Right ventricle myocardium superior (tissue), 1 donor: ENCODE measurements at regions of chr10 and their contacts with region 1.

Region 1: DNA sequence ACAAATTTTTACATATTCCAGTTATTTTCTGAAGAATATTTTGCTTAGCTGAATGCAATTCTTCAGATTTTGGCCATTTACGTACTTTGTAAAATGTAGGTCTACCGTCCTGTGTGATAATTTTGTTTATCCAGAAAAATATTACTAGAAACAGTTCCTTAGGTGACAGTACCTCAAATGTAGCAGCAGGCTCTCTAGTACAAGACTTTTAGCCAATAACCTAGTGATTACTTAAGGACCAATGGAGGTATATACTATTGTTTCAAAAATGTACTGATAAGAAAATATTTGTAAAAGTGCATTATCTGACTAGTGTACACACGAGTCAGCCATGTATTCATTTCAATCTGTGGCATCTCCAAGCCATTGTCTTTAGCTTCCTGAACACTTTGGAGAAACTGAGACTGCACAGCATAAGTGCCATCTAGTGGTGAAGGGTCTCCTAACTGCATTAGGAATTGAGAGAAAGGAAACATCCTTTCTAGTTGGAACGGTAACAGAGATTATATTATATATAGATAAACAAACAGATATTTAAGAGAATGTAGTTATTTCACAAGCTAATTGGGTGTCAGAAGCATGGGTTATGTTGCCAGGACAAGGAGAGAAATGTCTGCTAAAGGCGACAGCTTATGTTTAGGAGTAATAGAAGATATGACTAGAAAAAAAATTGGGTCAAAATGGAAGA is 23.7 kb downstream of the RTKN2 start:
- DNase-seq: no peak
- ATAC-seq: peak; percentile 90

Region 2: GRCh38 chr10:61750929-61751471 is 493.9 kb before region 1 on chr10:
- intact Hi-C with region 1: loop called (anchors 10 kb)
- DNase-seq: peak; percentile 64
- ATAC-seq: peak; percentile 93

Region 3: DNA sequence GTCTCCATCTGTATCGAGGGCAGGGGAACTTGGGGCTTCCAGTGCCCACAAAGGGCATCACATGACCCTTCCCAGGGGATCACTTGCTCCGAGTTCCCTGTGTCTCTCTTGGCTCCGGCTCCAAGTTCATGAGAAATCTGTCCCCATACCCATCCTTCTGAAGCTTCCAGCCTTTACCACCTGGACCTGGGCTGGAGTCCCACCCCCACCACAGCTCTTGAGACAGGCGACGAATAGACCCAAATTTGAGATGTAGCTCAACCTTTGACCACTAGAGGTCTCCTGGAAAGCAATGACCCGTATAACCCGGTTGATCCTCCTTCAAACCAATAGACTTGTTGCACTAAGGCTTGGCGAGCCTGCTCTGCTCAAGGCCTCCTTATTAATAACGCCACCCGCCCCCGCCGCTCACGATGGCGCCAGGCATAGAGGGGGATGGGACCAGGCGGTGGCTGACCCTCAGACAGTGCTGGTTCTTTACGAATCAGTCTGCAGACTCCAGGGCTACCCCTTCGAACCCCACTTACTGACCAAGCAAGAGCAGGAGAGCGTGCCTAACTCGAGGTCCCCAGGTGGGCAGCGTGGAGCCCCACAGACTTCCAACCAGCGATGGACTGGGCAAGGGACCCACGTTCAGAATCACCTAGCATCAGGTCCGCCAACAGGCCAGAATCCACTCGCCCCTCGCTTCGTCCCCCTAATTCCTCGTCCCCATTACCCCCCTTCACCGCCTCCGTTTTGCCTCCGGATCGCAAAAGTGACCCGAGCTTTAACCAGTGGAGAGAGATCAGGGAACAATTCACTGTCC is 347.9 kb before region 1 on chr10:
- intact Hi-C with region 1: loop called (anchors 5 kb)
- DNase-seq: peak; percentile 73
- ATAC-seq: peak; percentile 82

Region 4: DNA sequence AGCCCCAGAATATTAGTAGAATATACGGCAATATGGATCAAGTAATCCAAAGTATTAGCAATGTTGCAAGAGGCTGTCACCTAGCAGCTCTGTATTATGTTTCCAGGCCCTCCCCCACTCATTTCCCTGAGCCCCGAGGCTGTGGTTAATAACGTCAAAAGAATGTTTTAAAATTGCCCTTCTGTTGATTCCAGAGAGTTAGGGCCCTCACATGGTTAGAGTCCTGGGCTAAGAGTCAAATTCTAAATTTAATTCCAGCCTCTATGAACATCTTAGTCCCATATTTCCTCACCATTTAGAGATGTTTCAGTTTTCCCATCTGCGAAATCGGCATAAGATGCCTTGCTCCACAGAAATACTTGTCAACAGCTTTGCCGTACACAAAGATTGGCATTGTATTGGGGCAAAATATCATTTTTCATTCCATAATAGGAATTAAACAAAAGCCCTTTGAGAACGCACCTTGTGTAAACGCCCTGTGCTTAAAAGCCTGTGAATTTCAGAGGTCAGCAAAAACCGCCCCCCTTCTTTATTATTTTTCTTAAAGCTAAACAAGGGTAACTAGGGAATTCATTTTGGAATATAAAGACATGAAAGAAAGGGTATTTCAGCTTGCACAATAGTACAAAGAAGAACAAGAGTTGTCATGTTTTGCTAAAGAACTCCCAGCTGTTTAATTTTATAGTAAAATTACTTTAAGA is 207.6 kb before region 1 on chr10:
- intact Hi-C with region 1: loop called (anchors 2 kb)
- DNase-seq: no peak
- ATAC-seq: peak; percentile 16